ENCODE measurements at regions of chr17 and their contacts with region 1.

Region 1: GRCh38 chr17:73255671-73256181 is 6.0 kb downstream of the CPSF4L start:
- DNase-seq: peak; percentile 48
- ATAC-seq: peak; percentile 92
- H3K4me3 ChIP-seq: no peak overlapping the region
- H3K27ac ChIP-seq: no peak overlapping the region
- H3K4me1 ChIP-seq: no peaks in the 10 kb centered on the region
- H3K27me3 ChIP-seq: no peaks in the 10 kb centered on the region
- CTCF ChIP-seq: peak; percentile 97 to 100 (median 98)
- POLR2A ChIP-seq: no peak
- RAD21 ChIP-seq: peak; percentile 100

Region 2: DNA sequence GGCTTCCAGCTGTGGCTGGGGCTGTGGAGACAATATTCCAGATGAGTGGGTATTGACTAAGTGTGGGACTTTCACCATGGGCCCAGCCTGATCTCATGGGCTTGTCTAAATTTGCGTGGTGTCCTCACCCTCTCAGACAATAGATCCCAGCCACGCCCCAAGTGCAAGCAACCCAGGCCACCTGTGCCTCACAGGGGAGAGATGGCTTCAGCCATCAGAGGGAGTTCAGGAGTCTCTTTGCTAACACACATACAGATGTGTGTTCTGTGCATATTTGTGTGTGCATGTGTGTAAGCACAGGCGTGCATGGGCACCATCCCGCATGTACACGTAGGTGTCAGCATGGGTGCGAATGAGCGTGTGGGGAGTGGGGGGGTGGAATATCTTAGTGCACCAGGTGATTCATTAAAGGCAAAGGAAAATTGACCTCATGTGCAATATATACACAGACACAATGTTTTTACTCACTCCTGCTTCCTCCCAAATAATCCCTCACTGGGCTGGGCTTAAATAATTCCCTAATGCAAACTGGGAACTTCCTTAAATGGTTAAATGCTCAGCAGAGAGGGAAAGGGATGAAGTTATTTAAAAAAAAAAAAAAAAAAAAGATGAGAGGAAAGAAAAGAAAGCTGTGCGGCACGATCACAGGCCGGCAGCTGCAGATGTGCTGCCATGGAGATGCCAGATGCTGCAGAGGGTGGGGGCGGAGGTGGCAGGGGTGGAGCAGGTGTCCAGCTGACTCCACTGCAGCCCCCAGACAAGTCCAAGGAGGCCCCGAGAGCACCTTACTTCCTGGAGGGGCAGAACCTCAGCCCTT is 80.1 kb after region 1 on chr17:
- CTCF ChIA-PET with region 1: no interaction called
- POLR2A ChIA-PET with region 1: no interaction called
- RAD21 ChIA-PET with region 1: no interaction called
- intact Hi-C with region 1: no loop called
- DNase-seq: no peak
- ATAC-seq: no peak
- H3K4me3 ChIP-seq: no peak overlapping the region
- H3K27ac ChIP-seq: no peak overlapping the region
- H3K4me1 ChIP-seq: peaks cover 11 to 21% of the 10 kb centered on the region in 2 experiments
- H3K27me3 ChIP-seq: no peaks in the 10 kb centered on the region
- CTCF ChIP-seq: no peak
- POLR2A ChIP-seq: no peak
- RAD21 ChIP-seq: no peak

Region 3: GRCh38 chr17:73359987-73360410 is 104.3 kb after region 1 on chr17:
- CTCF ChIA-PET with region 1: interaction called, 10 read pairs
- POLR2A ChIA-PET with region 1: interaction called, 3 read pairs
- RAD21 ChIA-PET with region 1: interaction called, 3 to 4 read pairs
- intact Hi-C with region 1: no loop called
- DNase-seq: peak; percentile 59
- ATAC-seq: peak; percentile 96
- H3K4me3 ChIP-seq: peak overlapping the region; percentile 1 to 36; a peak in 2 of 4 replicates
- H3K27ac ChIP-seq: peak overlapping the region; percentile 2; the same call in 1 of the 2 replicates
- H3K4me1 ChIP-seq: peaks cover 14 to 29% of the 10 kb centered on the region in 2 experiments
- H3K27me3 ChIP-seq: no peaks in the 10 kb centered on the region
- CTCF ChIP-seq: peak; percentile 47 to 54 (median 53); a peak in 4 of 6 replicates
- POLR2A ChIP-seq: no peak
- RAD21 ChIP-seq: peak; percentile 77

Region 4: DNA sequence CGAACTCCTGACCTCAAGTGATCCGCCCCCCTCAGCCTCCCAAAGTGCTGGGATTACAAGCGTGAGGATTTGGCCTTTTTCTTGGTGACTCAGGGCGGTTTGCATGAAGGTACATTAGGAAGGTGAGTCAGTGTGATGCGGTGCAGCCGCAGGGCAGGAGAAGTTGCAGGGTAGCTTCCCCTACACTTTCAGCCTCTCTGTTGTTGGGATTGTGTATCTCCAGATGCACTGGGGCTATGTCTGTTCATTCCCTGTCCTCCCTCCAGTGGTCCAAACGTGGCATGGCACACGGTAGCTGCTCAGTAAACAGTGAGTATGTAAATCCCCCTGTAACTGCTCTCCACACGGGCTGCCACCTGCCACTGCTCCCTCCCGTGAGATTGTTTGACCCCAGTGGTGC is 165.2 kb after region 1 on chr17:
- CTCF ChIA-PET with region 1: interaction called, 5 read pairs
- POLR2A ChIA-PET with region 1: no interaction called
- RAD21 ChIA-PET with region 1: no interaction called
- intact Hi-C with region 1: loop called (anchors 1 kb)
- DNase-seq: peak; percentile 77
- ATAC-seq: peak; percentile 98
- H3K4me3 ChIP-seq: no peak overlapping the region
- H3K27ac ChIP-seq: no peak overlapping the region
- H3K4me1 ChIP-seq: peaks cover 6 to 15% of the 10 kb centered on the region in 2 experiments; a peak in 3 of 4 replicates
- H3K27me3 ChIP-seq: no peaks in the 10 kb centered on the region
- CTCF ChIP-seq: peak; percentile 28 to 80 (median 68); a peak in 5 of 6 replicates
- POLR2A ChIP-seq: no peak
- RAD21 ChIP-seq: peak; percentile 64

Region 5: DNA sequence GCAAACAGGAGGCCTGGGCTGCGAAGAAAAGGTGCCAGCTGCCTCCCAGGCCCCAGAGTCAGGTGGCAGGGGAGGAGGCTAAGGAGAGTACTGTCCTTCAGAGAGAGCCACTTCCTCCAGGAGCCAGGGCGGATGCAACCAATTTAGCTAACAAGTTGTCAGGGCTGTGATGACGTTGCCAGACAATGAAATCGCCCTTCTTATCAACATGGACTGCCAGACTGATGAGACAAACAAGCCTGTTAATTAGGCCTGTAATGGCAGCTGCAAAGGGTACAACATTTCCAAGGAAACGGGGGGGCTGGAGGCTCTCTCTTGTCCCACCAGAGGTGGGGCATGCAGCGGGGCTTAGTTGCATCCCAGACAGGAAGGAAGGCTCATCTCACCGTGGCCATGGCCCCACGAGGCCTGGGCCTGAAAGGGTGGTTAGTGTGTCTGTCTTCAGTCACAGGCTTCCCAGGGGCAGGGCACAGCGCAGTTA is 276.7 kb after region 1 on chr17:
- CTCF ChIA-PET with region 1: no interaction called
- POLR2A ChIA-PET with region 1: no interaction called
- RAD21 ChIA-PET with region 1: no interaction called
- intact Hi-C with region 1: no loop called
- DNase-seq: no peak
- ATAC-seq: no peak
- H3K4me3 ChIP-seq: no peak overlapping the region
- H3K27ac ChIP-seq: no peak overlapping the region
- H3K4me1 ChIP-seq: no peaks in the 10 kb centered on the region
- H3K27me3 ChIP-seq: peaks cover 33% of the 10 kb centered on the region
- CTCF ChIP-seq: no peak
- POLR2A ChIP-seq: no peak
- RAD21 ChIP-seq: no peak

Region 6: DNA sequence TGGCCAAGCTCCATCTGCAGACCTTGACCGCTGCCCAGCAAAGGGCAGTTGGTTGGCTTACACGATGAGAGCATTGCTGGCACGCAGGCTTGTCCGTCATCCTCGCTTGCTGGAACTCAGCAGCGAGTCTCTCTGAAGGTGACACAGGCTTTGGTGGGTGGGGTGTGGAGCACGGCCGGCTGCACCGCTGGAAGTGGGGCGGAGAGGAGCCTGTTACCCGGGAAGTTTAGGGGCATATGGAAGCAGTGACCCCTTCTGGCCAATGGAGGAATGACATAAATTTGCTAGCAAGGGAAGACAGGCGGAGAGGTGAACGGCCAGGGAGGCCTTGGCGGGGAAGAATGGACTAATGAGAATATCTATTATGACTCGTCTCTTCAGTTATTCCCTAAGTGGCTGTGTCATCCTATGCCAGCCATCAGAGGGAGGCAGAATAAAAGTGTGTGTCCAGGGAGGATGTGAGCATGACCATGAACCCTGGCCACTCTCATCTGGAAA is 454.4 kb after region 1 on chr17:
- CTCF ChIA-PET with region 1: no interaction called
- POLR2A ChIA-PET with region 1: no interaction called
- RAD21 ChIA-PET with region 1: no interaction called
- intact Hi-C with region 1: loop called (anchors 5 kb)
- DNase-seq: peak; percentile 67
- ATAC-seq: peak; percentile 94
- H3K4me3 ChIP-seq: no peak overlapping the region
- H3K27ac ChIP-seq: no peak overlapping the region
- H3K4me1 ChIP-seq: peaks cover 0 to 5% of the 10 kb centered on the region in 2 experiments; a peak in 1 of 4 replicates
- H3K27me3 ChIP-seq: peaks cover 55% of the 10 kb centered on the region
- CTCF ChIP-seq: peak; percentile 83 to 94 (median 90)
- POLR2A ChIP-seq: no peak
- RAD21 ChIP-seq: peak; percentile 90

Region 7: DNA sequence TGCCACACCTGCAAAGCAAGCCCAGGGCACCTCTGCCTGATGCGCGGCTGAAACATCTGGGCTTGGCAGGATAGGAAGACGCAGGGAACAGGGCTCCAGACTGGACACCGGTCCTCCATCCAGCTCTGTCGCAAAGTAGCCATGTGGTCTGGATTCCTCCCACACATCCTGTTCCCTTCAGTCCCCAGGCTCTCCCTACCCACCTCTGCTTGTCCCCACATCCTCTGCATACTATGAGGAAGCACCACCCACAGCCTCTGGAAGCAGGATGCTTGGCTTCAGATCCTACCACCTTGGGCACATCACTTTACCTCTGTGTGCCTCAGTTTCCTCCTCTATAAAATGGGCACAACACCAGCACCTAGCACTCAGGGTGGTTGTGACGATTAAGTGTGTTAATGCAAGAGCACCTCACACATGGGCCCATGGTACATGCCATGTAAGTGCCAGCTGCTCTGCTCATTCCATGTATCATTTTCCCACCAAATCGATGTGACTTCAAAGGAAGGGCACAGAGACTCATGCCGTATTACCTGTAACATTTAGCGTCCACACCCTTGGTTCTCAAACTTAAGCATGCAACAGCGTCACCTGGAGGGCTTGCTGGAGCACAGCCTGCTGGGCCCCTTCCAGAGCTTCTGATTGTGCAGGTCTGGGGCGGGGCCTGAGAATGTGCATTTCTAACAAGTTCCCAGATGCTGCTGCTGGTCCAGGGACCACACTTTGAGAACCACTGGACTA is 527.1 kb after region 1 on chr17:
- CTCF ChIA-PET with region 1: no interaction called
- POLR2A ChIA-PET with region 1: no interaction called
- RAD21 ChIA-PET with region 1: no interaction called
- intact Hi-C with region 1: loop called (anchors 10 kb)
- DNase-seq: peak; percentile 74
- ATAC-seq: peak; percentile 87
- H3K4me3 ChIP-seq: no peak overlapping the region
- H3K27ac ChIP-seq: no peak overlapping the region
- H3K4me1 ChIP-seq: peaks cover 0 to 8% of the 10 kb centered on the region in 2 experiments; a peak in 2 of 4 replicates
- H3K27me3 ChIP-seq: peaks cover 61% of the 10 kb centered on the region; the same call in 1 of the 2 replicates
- CTCF ChIP-seq: peak; percentile 73 to 96 (median 91)
- POLR2A ChIP-seq: no peak
- RAD21 ChIP-seq: peak; percentile 86

Region 8: GRCh38 chr17:74176546-74177001 is 920.8 kb after region 1 on chr17:
- CTCF ChIA-PET with region 1: no interaction called
- POLR2A ChIA-PET with region 1: no interaction called
- RAD21 ChIA-PET with region 1: no interaction called
- intact Hi-C with region 1: loop called (anchors 10 kb)
- DNase-seq: peak; percentile 56
- ATAC-seq: peak; percentile 97
- H3K4me3 ChIP-seq: no peak overlapping the region
- H3K27ac ChIP-seq: no peak overlapping the region
- H3K4me1 ChIP-seq: no peaks in the 10 kb centered on the region
- H3K27me3 ChIP-seq: peaks cover 38% of the 10 kb centered on the region; the same call in 1 of the 2 replicates
- CTCF ChIP-seq: peak; percentile 89 to 99 (median 97)
- POLR2A ChIP-seq: no peak
- RAD21 ChIP-seq: peak; percentile 98